Transverse colon (tissue), 4 donors: ENCODE measurements at regions of chr11 and their contacts with region 1.

Region 1: DNA sequence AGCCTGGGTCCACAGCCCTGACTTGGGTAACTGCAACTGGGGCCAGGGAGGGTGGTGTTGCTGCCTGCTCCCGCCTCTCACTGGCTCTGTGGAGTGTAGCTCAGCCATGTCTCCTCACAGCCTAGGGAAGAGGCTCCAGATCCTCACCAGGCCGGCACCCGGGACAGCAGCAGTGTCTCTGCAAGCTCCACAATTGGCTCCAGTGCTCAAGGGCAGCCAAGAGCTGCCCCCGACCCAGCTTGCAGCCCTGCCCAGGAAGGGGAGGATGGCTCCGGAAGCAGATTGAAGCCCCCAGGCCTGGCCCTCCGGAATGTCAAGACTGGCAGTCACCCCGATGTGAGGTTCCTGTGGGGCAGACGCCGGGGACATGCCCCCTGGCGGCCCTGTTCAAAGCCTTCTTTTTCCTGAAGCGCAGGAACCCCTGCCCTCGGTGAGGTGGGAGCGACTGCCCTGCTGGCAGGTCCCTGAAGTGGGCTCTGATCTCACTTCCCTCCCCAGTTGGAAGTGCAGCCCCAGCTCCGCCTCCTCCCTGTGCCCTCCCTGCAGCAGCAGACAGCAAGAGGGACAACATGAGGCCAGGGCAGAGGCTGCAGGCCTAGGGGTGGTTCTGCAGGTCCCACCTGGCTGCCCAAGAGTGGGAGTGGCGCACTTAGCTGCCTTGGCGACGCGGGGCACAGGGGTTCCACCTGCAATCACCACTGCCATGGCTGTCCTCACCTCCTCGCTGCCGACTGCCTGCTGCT is 816.2 kb upstream of the LUZP2 start:
- DNase-seq: no peak
- H3K4me3 ChIP-seq: no peak overlapping the region
- H3K27ac ChIP-seq: no peak overlapping the region
- H3K4me1 ChIP-seq: no peaks in the 10 kb centered on the region
- H3K27me3 ChIP-seq: no peaks in the 10 kb centered on the region
- CTCF ChIP-seq: no peak
- EP300 ChIP-seq: no peak
- POLR2A ChIP-seq: no peak

Region 2: GRCh38 chr11:23257556-23257955 is 423.1 kb before region 1 on chr11:
- in situ Hi-C with region 1: no loop called
- intact Hi-C with region 1: loop called (anchors 5 kb)
- DNase-seq: no peak
- H3K4me3 ChIP-seq: no peak overlapping the region
- H3K27ac ChIP-seq: no peak overlapping the region
- H3K4me1 ChIP-seq: no peaks in the 10 kb centered on the region
- H3K27me3 ChIP-seq: no peaks in the 10 kb centered on the region
- CTCF ChIP-seq: no peak
- EP300 ChIP-seq: no peak
- POLR2A ChIP-seq: no peak